Activated naive CD8-positive, alpha-beta T cell treated with anti-CD3 and anti-CD28 coated beads, Interleukin-2, amount 10 ng/mL, durations not matched to agents 7 days and 5 days (primary cell): ENCODE measurements at regions of chr1 and their contacts with region 1.

Region 1: DNA sequence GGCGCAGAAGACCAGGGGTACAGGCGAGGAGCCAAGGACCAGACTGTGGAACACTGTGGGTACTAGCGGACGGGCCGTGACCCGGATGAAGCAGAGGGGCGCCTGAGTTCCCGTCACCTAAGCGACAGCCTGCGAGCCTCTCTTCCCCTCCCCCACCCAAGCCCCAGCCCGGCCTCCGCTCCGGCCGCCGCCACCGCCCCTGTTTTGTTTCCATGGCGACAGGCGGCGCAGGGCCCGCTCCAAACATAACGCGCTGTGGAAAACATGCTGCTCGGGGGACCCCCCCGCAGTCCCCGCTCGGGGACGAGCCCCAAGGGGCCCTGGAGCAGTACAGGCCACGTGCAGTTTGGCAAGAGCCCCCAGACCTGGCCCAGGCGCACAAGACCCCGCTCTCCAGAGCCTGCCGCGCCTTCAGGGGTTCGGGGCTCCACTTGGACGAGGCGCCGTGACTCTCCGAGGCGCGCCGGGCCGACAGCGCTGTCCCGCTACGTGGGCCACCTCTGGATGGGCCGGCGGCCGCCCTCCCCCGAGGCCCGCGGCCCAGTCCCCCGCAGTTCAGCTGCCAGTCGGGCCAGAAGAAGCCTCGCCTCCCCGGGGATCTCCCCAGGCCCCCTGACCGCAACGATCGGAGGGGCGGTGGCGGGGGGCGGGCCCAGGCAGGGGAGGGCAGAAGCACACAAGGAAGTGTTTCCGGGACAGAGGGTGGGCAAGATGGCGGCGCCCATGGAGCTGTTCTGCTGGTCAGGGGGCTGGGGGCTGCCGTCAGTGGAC is at the start of gene MTX1:
- DNase-seq: peak; percentile 89
- ATAC-seq: peak; percentile 74
- H3K4me3 Mint-ChIP-seq: peak within 1 kb of the TSS; percentile 90
- H3K27ac Mint-ChIP-seq: peak within 1 kb of the TSS; percentile 90
- H3K4me1 Mint-ChIP-seq: peaks cover 25% of the 10 kb centered on the region
- H3K27me3 Mint-ChIP-seq: no peaks in the 10 kb centered on the region
- total RNA-seq, gene MTX1: 31.5 to 31.7 TPM

Region 2: GRCh38 chr1:155106850-155107249 is 101.9 kb before region 1 on chr1:
- POLR2A ChIA-PET with region 1: no interaction called
- DNase-seq: no peak
- ATAC-seq: no peak
- H3K4me3 Mint-ChIP-seq: no peak overlapping the region
- H3K27ac Mint-ChIP-seq: no peak overlapping the region
- H3K4me1 Mint-ChIP-seq: no peaks in the 10 kb centered on the region
- H3K27me3 Mint-ChIP-seq: peaks cover 13% of the 10 kb centered on the region

Region 3: GRCh38 chr1:155218854-155219591 is 10.3 kb after region 1 on chr1:
- POLR2A ChIA-PET with region 1: interaction called, 17 read pairs
- DNase-seq: no peak
- ATAC-seq: no peak
- H3K4me3 Mint-ChIP-seq: peak overlapping the region; percentile 68
- H3K27ac Mint-ChIP-seq: peak overlapping the region; percentile 91
- H3K4me1 Mint-ChIP-seq: peaks cover 24% of the 10 kb centered on the region
- H3K27me3 Mint-ChIP-seq: no peaks in the 10 kb centered on the region

Region 4: GRCh38 chr1:155227261-155228095 is 18.8 kb after region 1 on chr1:
- POLR2A ChIA-PET with region 1: interaction called, 32 read pairs
- DNase-seq: peak; percentile 96
- ATAC-seq: peak; percentile 96
- H3K4me3 Mint-ChIP-seq: peak overlapping the region; percentile 95
- H3K27ac Mint-ChIP-seq: peak overlapping the region; percentile 92
- H3K4me1 Mint-ChIP-seq: peaks cover 24% of the 10 kb centered on the region
- H3K27me3 Mint-ChIP-seq: no peaks in the 10 kb centered on the region